GM12878 (cell line): ENCODE measurements at regions of chr5 and their contacts with region 1.

Region 1: GRCh38 chr5:142748568-142749249 is 21.5 kb upstream of the ARHGAP26 start:
- DNase-seq: no peak
- ATAC-seq: peak; percentile 84
- H3K4me3 ChIP-seq: no peak overlapping the region
- H3K27ac ChIP-seq: no peak overlapping the region
- H3K4me1 ChIP-seq: no peaks in the 10 kb centered on the region
- H3K27me3 ChIP-seq: no peaks in the 10 kb centered on the region; a peak in 2 of 4 replicates
- CTCF ChIP-seq: peak; percentile 67 to 83 (median 67)
- EP300 ChIP-seq: no peak
- POLR2A ChIP-seq: no peak
- RAD21 ChIP-seq: peak; percentile 72

Region 2: GRCh38 chr5:142720641-142721271 is 28.0 kb before region 1 on chr5:
- CTCF ChIA-PET with region 1: interaction called, 43 read pairs
- POLR2A ChIA-PET with region 1: no interaction called
- RAD21 ChIA-PET with region 1: interaction called, 10 read pairs
- SMC1A ChIA-PET with region 1: interaction called, 32 read pairs
- in situ Hi-C with region 1: no loop called
- intact Hi-C with region 1: no loop called
- DNase-seq: no peak
- ATAC-seq: no peak
- H3K4me3 ChIP-seq: no peak overlapping the region
- H3K27ac ChIP-seq: no peak overlapping the region
- H3K4me1 ChIP-seq: no peaks in the 10 kb centered on the region
- H3K27me3 ChIP-seq: no peaks in the 10 kb centered on the region; a peak in 1 of 4 replicates
- CTCF ChIP-seq: no peak
- EP300 ChIP-seq: no peak
- POLR2A ChIP-seq: no peak
- RAD21 ChIP-seq: no peak

Region 3: DNA sequence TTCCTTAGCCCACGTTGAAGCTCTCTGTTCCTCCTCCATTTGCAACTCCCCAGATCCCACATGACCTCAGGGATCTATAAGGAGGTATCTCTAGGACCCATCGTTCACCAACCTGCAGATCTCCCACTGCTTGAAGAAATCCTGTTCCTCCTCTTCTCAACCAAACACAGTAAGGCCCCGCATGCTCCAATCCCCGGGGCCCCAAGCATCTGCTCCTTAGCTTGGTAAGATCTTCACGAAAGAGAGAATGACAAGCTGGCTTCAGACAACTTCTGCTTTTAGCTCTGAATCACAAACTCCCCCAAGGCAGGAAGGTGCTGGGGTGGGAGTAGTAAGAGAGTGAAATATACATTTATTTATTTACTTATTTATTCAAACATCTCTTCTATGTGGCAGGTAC is 11.5 kb before region 1 on chr5:
- CTCF ChIA-PET with region 1: interaction called, 14 read pairs
- POLR2A ChIA-PET with region 1: no interaction called
- RAD21 ChIA-PET with region 1: interaction called, 4 read pairs
- SMC1A ChIA-PET with region 1: interaction called, 4 read pairs
- in situ Hi-C with region 1: no loop called
- intact Hi-C with region 1: no loop called
- DNase-seq: no peak
- ATAC-seq: peak; percentile 20; the same call in 1 of the 3 replicates
- H3K4me3 ChIP-seq: no peak overlapping the region
- H3K27ac ChIP-seq: no peak overlapping the region
- H3K4me1 ChIP-seq: peaks cover 8% of the 10 kb centered on the region
- H3K27me3 ChIP-seq: peaks cover 0 to 2% of the 10 kb centered on the region in 2 experiments; a peak in 2 of 4 replicates
- CTCF ChIP-seq: no peak
- EP300 ChIP-seq: no peak
- POLR2A ChIP-seq: no peak
- RAD21 ChIP-seq: no peak

Region 4: GRCh38 chr5:142769741-142770631 is 21.3 kb after region 1 on chr5 and contains the start of gene ARHGAP26:
- CTCF ChIA-PET with region 1: interaction called, 14 read pairs
- POLR2A ChIA-PET with region 1: no interaction called
- RAD21 ChIA-PET with region 1: no interaction called
- SMC1A ChIA-PET with region 1: interaction called, 5 read pairs
- in situ Hi-C with region 1: no loop called
- intact Hi-C with region 1: no loop called
- DNase-seq: peak; percentile 70
- ATAC-seq: peak; percentile 99
- H3K4me3 ChIP-seq: peak within 1 kb of the TSS; percentile 85
- H3K27ac ChIP-seq: no peak within 1 kb of the TSS
- H3K4me1 ChIP-seq: peaks cover 5% of the 10 kb centered on the region; the same call in 1 of the 2 replicates
- H3K27me3 ChIP-seq: peaks cover 0 to 3% of the 10 kb centered on the region in 2 experiments; a peak in 3 of 4 replicates
- CTCF ChIP-seq: peak in 2 of 3 experiments; percentile 17 to 35; a peak in 2 of 6 replicates
- EP300 ChIP-seq: no peak
- POLR2A ChIP-seq: peak; percentile 91
- RAD21 ChIP-seq: no peak
- polyA plus RNA-seq, gene ARHGAP26: 9.4 to 9.8 TPM

Region 5: GRCh38 chr5:142862594-142862993 is 113.9 kb after region 1 on chr5:
- CTCF ChIA-PET with region 1: interaction called, 57 read pairs
- POLR2A ChIA-PET with region 1: no interaction called
- RAD21 ChIA-PET with region 1: interaction called, 31 read pairs
- SMC1A ChIA-PET with region 1: interaction called, 50 read pairs
- in situ Hi-C with region 1: no loop called
- intact Hi-C with region 1: loop called (anchors 1 kb)
- DNase-seq: no peak
- ATAC-seq: no peak
- H3K4me3 ChIP-seq: no peak overlapping the region
- H3K27ac ChIP-seq: no peak overlapping the region
- H3K4me1 ChIP-seq: no peaks in the 10 kb centered on the region
- H3K27me3 ChIP-seq: no peaks in the 10 kb centered on the region
- CTCF ChIP-seq: no peak
- EP300 ChIP-seq: no peak
- POLR2A ChIP-seq: no peak
- RAD21 ChIP-seq: no peak

Region 6: DNA sequence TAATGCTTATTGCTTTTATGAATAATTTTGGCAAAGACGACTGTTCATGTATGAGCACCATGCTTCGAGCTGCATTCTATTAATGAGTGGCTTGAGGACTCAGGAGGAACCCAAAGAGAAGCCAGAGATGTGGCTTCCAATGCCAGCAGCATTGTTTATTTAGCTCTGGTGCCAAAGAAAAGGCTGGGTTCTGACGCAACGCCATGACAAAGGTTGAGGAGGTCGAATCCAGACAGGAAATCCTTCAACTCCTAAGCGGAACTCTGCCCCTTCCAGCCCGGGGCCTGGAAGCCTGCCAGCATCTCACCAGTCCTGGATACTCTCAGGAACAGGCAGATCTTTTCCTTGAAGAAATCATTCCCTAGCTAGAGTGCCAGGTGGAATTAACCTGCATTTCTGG is 125.8 kb after region 1 on chr5:
- CTCF ChIA-PET with region 1: interaction called, 144 read pairs
- POLR2A ChIA-PET with region 1: no interaction called
- RAD21 ChIA-PET with region 1: interaction called, 17 read pairs
- SMC1A ChIA-PET with region 1: interaction called, 50 read pairs
- in situ Hi-C with region 1: no loop called
- intact Hi-C with region 1: no loop called
- DNase-seq: no peak
- ATAC-seq: no peak
- H3K4me3 ChIP-seq: no peak overlapping the region
- H3K27ac ChIP-seq: no peak overlapping the region
- H3K4me1 ChIP-seq: no peaks in the 10 kb centered on the region
- H3K27me3 ChIP-seq: no peaks in the 10 kb centered on the region
- CTCF ChIP-seq: no peak
- EP300 ChIP-seq: no peak
- POLR2A ChIP-seq: no peak
- RAD21 ChIP-seq: no peak

Region 7: GRCh38 chr5:142881076-142881783 is 132.5 kb after region 1 on chr5:
- CTCF ChIA-PET with region 1: interaction called, 144 read pairs
- POLR2A ChIA-PET with region 1: no interaction called
- RAD21 ChIA-PET with region 1: interaction called, 17 read pairs
- SMC1A ChIA-PET with region 1: interaction called, 49 read pairs
- in situ Hi-C with region 1: no loop called
- intact Hi-C with region 1: loop called (anchors 1 kb)
- DNase-seq: no peak
- ATAC-seq: peak; percentile 55
- H3K4me3 ChIP-seq: no peak overlapping the region
- H3K27ac ChIP-seq: no peak overlapping the region
- H3K4me1 ChIP-seq: no peaks in the 10 kb centered on the region
- H3K27me3 ChIP-seq: no peaks in the 10 kb centered on the region
- CTCF ChIP-seq: no peak
- EP300 ChIP-seq: no peak
- POLR2A ChIP-seq: no peak
- RAD21 ChIP-seq: no peak